ENCODE measurements at regions of chr12 and their contacts with region 1.

Region 1: DNA sequence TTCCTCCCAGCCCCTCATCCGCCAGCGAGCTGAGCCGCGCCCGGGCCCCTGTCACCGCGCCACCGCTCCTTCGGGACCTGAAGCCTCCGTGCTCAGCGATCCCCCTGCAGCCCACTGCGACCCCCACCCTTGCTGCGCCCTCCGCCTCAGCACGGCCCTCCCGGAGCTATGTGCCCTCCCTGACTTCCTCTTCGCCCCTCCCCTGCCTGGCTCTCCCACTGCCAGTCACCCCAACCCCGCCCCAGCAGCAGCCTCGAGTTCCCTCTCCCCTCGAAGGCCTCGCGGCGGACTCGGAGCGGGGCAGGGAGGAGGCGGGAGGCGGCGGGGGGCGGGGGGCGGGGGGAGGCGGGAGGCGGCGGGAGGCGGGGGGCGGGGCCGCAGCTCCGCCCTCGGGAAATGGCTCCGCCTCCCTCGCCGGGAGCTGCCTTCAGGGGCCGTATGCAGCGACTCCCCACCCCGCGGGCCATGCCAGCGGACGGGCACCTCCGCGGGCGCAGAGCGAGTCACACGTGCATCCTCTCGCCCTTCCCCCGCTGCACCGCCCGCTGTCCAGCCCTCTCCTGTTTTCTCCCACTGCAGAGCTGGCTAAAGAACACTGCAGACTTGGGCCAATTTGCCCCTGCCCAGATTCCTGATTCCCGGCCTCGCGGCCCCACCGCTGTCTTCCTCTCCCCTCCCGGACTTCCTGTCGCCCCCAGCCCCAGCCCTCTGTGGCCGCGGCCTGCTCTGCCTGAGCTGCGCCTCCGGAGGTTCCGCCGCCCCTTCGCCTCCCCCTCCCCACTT is 29.1 kb upstream of the ADIPOR2 start:
- DNase-seq: peak; percentile 71
- ATAC-seq: peak; percentile 35
- H3K4me3 Mint-ChIP-seq: peak overlapping the region; percentile 73
- H3K27ac Mint-ChIP-seq: no peak overlapping the region
- H3K4me1 Mint-ChIP-seq: peaks cover 15% of the 10 kb centered on the region
- H3K27me3 Mint-ChIP-seq: peaks cover 49% of the 10 kb centered on the region
- CTCF ChIP-seq: no peak

Region 2: GRCh38 chr12:1619587-1619986 is 42.2 kb before region 1 on chr12:
- CTCF ChIA-PET with region 1: no interaction called
- POLR2A ChIA-PET with region 1: no interaction called
- DNase-seq: no peak
- ATAC-seq: no peak
- H3K4me3 Mint-ChIP-seq: no peak overlapping the region
- H3K27ac Mint-ChIP-seq: no peak overlapping the region
- H3K4me1 Mint-ChIP-seq: peaks cover 18% of the 10 kb centered on the region
- H3K27me3 Mint-ChIP-seq: peaks cover 22% of the 10 kb centered on the region
- CTCF ChIP-seq: no peak

Region 3: DNA sequence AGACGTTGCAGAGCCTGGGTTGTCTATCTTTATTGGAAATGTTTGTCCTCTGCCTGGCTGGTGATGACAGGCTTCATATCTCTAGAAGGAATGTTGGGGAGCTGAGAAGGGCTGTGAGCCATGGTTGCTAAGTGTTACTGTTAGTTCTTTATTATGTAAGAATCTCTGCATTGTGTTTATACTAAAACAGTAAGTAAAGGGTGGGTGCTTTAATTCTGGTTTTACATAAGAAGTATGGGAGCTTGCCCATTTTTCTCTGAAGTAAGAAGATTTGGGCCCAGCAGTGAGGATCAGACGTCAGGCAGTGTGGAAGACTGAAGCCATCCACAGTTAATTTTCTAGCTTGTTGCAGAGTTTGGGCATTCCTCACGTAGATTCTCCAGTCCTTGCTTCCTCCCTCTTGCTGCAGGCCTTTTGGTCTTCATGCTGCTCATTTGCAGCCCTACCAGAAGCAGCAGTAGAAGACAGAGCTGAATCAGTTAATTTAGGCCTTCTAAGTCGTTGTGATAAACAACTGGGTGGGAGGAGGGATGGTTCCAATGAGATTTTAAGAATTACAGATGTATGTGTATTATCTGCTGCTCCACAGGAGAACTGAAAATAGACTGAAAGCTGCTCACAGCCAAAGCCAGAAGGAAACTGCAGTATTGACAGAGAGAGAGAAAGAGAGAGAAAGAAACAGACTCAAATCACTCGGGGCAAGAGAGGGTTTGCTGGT is 11.3 kb before region 1 on chr12:
- CTCF ChIA-PET with region 1: interaction called, 15 read pairs
- POLR2A ChIA-PET with region 1: no interaction called
- DNase-seq: no peak
- ATAC-seq: no peak
- H3K4me3 Mint-ChIP-seq: no peak overlapping the region
- H3K27ac Mint-ChIP-seq: no peak overlapping the region
- H3K4me1 Mint-ChIP-seq: peaks cover 12% of the 10 kb centered on the region
- H3K27me3 Mint-ChIP-seq: no peaks in the 10 kb centered on the region
- CTCF ChIP-seq: no peak